Left ventricle myocardium inferior (tissue), 1 donor: ENCODE measurements at regions of chr15 and their contacts with region 1.

Region 1: DNA sequence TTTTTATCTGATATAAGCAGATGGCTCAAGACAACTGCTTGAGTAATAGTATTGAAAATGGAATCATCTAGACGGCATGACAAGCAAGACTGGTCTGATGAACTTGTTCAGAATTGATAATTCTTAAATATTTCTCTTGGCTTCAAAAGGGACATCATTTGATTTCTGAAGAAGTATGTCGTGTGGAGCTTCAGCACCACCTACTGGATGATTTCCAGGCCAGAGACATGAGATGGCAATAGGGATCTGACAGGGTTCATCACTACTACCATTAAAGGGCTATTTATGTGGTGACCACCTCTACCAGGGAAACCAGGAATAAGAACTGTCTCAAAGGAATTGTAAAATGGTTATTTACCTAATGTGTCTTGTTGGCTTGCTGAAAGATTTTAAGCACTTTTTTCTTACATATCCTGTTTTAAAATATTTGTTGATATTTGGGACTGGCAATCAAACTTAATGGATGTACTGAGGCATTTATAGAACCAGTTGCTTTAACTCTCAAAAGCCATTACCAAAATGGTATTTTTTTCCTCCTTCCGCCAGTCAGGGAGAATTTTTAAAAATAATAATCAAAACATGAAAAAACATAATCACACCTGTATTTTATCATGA is 99.5 kb upstream of the FAM98B start:
- DNase-seq: peak; percentile 17
- H3K4me3 ChIP-seq: no peak overlapping the region
- H3K27ac ChIP-seq: no peak overlapping the region
- H3K4me1 ChIP-seq: no peaks in the 10 kb centered on the region
- H3K27me3 ChIP-seq: no peaks in the 10 kb centered on the region
- CTCF ChIP-seq: peak; percentile 91

Region 2: GRCh38 chr15:38002883-38003477 is 351.4 kb before region 1 on chr15:
- intact Hi-C with region 1: loop called (anchors 2 kb)
- DNase-seq: peak; percentile 44
- H3K4me3 ChIP-seq: no peak overlapping the region
- H3K27ac ChIP-seq: no peak overlapping the region
- H3K4me1 ChIP-seq: peaks cover 14% of the 10 kb centered on the region
- H3K27me3 ChIP-seq: no peaks in the 10 kb centered on the region
- CTCF ChIP-seq: peak; percentile 67

Region 3: DNA sequence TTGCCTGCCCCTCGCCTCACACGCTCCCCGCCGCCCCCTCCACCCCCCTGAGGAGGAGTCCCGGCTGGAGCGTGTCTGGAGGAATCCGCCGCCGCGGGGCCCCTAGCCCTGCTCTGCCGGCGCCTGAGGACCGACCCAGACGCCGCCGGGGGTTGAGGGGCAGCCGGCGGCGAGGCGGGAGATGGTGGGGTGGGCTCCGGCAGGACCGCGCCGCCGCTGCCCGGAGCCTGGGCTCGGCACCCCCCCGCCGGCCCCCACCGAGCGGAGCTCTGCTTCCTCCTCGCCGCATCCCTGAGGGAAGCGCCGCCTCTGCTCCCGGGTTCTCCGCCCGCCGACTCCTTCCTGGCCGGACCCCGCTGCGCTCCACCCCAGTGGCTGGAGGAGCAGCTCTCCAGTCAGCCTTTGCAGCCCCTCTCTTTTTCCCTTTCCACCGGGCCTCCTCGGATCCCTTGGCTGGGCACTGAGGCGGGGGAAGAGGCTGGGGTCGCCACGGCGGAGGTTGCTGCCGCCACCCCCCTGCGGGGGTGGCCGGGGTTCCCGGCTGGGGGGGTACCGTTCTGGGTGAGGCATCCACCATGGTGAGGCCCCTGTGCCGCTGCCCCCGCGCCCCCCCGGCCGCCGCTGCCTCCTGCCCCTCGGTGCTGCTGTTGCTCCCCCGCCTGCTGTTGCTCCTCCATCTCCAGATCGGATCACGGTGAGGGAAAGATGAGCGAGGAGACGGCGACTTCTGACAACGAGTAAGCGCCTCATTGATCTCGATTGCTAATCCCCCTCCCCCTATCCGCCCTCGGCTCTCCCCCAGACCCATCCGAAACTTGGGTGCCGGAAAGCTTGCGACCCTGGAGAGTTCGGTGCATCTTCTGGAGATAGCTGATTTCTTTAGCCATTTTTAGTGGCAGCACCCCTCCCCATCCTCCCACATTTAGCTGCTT is 101.7 kb before region 1 on chr15 and contains the start of gene SPRED1:
- intact Hi-C with region 1: loop called (anchors 10 kb)
- DNase-seq: peak; percentile 82
- H3K4me3 ChIP-seq: peak within 1 kb of the TSS; percentile 91
- H3K27ac ChIP-seq: peak within 1 kb of the TSS; percentile 99
- H3K4me1 ChIP-seq: peaks cover 65% of the 10 kb centered on the region
- H3K27me3 ChIP-seq: no peaks in the 10 kb centered on the region
- CTCF ChIP-seq: no peak
- total RNA-seq, gene SPRED1: 8.7 TPM